Kidney (tissue), 22 donors: ENCODE measurements at regions of chr11 and their contacts with region 1.

Region 1: DNA sequence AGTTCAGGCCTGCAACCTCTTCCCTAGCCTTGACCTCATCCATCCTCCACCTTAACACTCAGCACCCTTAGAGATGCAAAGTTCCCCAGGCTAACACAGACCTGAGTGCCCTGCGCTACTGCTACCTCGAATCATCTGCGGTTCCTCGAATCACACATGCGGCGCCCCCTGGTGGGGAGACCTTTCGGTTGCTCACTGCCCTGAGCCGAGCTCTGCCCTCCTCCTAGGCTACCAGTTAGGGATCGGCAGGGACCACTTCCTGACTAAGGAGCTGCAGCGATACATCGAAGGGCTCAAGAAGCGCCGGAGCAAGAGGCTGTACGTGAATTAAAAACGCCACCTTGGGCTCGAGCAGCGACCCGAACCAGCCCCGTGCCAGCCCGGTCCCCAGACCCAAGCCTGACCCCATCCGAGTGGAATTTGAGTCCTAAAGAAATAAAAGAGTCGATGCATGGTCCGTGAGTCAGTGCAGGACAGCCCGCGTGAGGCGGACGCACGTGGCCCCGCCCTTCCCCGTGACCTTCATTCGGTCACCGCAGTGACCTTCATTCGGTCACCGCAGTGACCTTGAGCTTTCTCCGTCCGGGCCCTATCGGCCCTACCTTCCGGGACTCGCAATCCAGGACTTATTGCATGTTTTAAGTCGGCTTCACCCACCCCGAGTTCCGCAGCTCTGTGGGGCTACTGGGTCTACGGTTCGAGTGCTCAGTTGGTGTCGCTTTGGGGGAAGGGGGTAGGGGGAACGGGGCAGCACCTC is 830 bp upstream of the ESRRA start:
- DNase-seq: peak; percentile 93 to 96 (median 94)
- H3K4me3 ChIP-seq: peak overlapping the region; percentile 62 to 83 (median 77)
- H3K27ac ChIP-seq: peak overlapping the region; percentile 98 to 99
- H3K4me1 ChIP-seq: peaks cover 0 to 34% (median 7%) of the 10 kb centered on the region in 3 donors
- H3K27me3 ChIP-seq: peaks cover 9% of the 10 kb centered on the region
- CTCF ChIP-seq: peak; percentile 83

Region 2: DNA sequence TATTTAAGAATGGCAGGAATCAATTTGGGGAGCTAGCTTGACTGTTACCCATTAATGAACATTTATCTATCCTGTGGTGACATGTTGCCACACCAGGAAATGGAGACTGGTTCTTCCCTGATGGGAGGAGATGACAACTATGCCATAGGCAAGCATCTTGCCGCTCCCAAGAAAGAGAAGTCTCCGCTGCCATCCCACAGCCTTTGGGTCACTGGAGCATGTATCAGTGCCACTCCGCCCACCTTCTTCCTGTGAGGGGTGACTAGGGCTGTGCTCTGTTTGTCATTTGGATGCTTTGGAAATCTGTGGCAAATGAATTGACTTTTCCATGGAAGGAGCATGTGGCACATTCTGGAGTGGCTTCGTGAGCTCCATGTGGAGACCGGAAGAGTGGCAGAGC is 112.1 kb before region 1 on chr11:
- intact Hi-C with region 1: loop called (anchors 5 kb)
- DNase-seq: no peak
- H3K4me3 ChIP-seq: no peak overlapping the region
- H3K27ac ChIP-seq: no peak overlapping the region
- H3K4me1 ChIP-seq: peaks cover 0 to 3% (median 3%) of the 10 kb centered on the region in 3 donors
- H3K27me3 ChIP-seq: no peaks in the 10 kb centered on the region
- CTCF ChIP-seq: no peak

Region 3: GRCh38 chr11:64409707-64410403 is 105.4 kb after region 1 on chr11:
- intact Hi-C with region 1: no loop called
- DNase-seq: peak in 4 of 5 donors; percentile 72 to 92 (median 84)
- H3K4me3 ChIP-seq: no peak overlapping the region
- H3K27ac ChIP-seq: no peak overlapping the region
- H3K4me1 ChIP-seq: no peaks in the 10 kb centered on the region
- H3K27me3 ChIP-seq: no peaks in the 10 kb centered on the region
- CTCF ChIP-seq: no peak